ENCODE measurements at regions of chr7 and their contacts with region 1.

Region 1: DNA sequence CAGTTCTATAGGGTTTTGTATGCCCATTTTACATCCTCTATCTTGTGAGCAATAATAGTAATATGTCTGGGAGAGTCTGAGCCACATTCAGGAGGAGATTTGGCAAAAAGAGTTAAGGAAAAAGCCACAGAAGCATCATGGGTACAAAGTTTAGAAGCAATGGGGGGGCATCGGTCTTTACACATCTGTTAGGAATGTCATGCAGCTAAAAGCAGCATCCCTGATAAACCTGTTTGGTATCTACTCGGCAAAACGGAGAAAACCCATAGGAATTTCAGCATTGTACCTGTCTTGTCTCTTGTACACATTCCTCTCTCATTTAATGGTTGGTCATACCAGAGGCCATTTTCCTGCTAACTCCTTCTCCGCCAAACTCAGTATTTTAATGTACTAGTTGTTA is 12.5 kb upstream of the HERPUD2 start:
- DNase-seq: no peak
- ATAC-seq: no peak
- H3K4me3 ChIP-seq: no peak overlapping the region
- H3K4me3 Mint-ChIP-seq: no peak overlapping the region
- H3K27ac ChIP-seq: no peak overlapping the region
- H3K27ac Mint-ChIP-seq: no peak overlapping the region
- H3K4me1 ChIP-seq: peaks cover 13% of the 10 kb centered on the region
- H3K4me1 Mint-ChIP-seq: peaks cover 23% of the 10 kb centered on the region
- H3K27me3 ChIP-seq: no peaks in the 10 kb centered on the region
- H3K27me3 Mint-ChIP-seq: no peaks in the 10 kb centered on the region
- CTCF ChIP-seq: no peak

Region 2: GRCh38 chr7:35723011-35723410 is 15.6 kb after region 1 on chr7:
- CTCF ChIA-PET with region 1: interaction called, 25 read pairs
- POLR2A ChIA-PET with region 1: interaction called, 7 read pairs
- intact Hi-C with region 1: loop called (anchors 2 kb)
- DNase-seq: peak in 3 of 9 experiments; percentile 22 to 84 (median 75)
- ATAC-seq: peak; percentile 61
- H3K4me3 ChIP-seq: no peak overlapping the region
- H3K4me3 Mint-ChIP-seq: no peak overlapping the region
- H3K27ac ChIP-seq: no peak overlapping the region
- H3K27ac Mint-ChIP-seq: peak overlapping the region; percentile 7
- H3K4me1 ChIP-seq: peaks cover 42% of the 10 kb centered on the region
- H3K4me1 Mint-ChIP-seq: peaks cover 57% of the 10 kb centered on the region
- H3K27me3 ChIP-seq: no peaks in the 10 kb centered on the region
- H3K27me3 Mint-ChIP-seq: no peaks in the 10 kb centered on the region
- CTCF ChIP-seq: no peak

Region 3: GRCh38 chr7:35729061-35729783 is 21.8 kb after region 1 on chr7:
- CTCF ChIA-PET with region 1: interaction called, 25 read pairs
- POLR2A ChIA-PET with region 1: interaction called, 7 read pairs
- intact Hi-C with region 1: loop called in 1 of 2 experiments (anchors 2 kb)
- DNase-seq: peak in 7 of 9 experiments; percentile 26 to 91 (median 52)
- ATAC-seq: peak; percentile 65
- H3K4me3 ChIP-seq: peak overlapping the region in 1 of 2 experiments; percentile 18
- H3K4me3 Mint-ChIP-seq: peak overlapping the region; percentile 26
- H3K27ac ChIP-seq: peak overlapping the region; percentile 22 to 77
- H3K27ac Mint-ChIP-seq: peak overlapping the region; percentile 78
- H3K4me1 ChIP-seq: peaks cover 56% of the 10 kb centered on the region
- H3K4me1 Mint-ChIP-seq: peaks cover 61% of the 10 kb centered on the region
- H3K27me3 ChIP-seq: no peaks in the 10 kb centered on the region
- H3K27me3 Mint-ChIP-seq: no peaks in the 10 kb centered on the region
- CTCF ChIP-seq: no peak

Region 4: DNA sequence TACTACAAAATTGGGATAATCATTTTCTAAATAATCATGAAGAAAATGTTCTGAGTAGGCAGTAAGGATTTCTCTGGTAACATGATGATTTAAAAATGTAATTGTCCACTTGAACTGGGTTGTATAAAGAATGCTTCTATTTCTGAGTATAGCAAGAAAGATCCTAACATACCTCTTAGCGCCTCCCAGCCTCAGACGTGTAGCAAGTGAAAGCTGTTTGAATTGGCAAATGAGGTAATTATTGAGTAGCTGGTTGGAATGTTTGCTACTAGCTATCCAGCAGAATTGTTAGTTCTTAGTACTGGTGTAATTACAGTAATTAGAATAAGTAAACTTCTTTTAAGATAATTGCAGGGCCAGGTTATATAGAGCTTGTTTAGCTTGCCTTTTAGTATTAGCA is 141.3 kb after region 1 on chr7:
- CTCF ChIA-PET with region 1: no interaction called
- POLR2A ChIA-PET with region 1: no interaction called
- intact Hi-C with region 1: no loop called
- DNase-seq: no peak
- ATAC-seq: no peak
- H3K4me3 ChIP-seq: no peak overlapping the region
- H3K4me3 Mint-ChIP-seq: no peak overlapping the region
- H3K27ac ChIP-seq: no peak overlapping the region
- H3K27ac Mint-ChIP-seq: no peak overlapping the region
- H3K4me1 ChIP-seq: peaks cover 23% of the 10 kb centered on the region
- H3K4me1 Mint-ChIP-seq: peaks cover 73% of the 10 kb centered on the region
- H3K27me3 ChIP-seq: no peaks in the 10 kb centered on the region
- H3K27me3 Mint-ChIP-seq: no peaks in the 10 kb centered on the region
- CTCF ChIP-seq: no peak

Region 5: GRCh38 chr7:35906191-35906908 is 198.9 kb after region 1 on chr7:
- CTCF ChIA-PET with region 1: interaction called, 29 read pairs
- POLR2A ChIA-PET with region 1: interaction called, 3 read pairs
- intact Hi-C with region 1: loop called (anchors 1 kb)
- DNase-seq: peak; percentile 44 to 86 (median 69)
- ATAC-seq: peak; percentile 94
- H3K4me3 ChIP-seq: no peak overlapping the region
- H3K4me3 Mint-ChIP-seq: no peak overlapping the region
- H3K27ac ChIP-seq: no peak overlapping the region
- H3K27ac Mint-ChIP-seq: no peak overlapping the region
- H3K4me1 ChIP-seq: no peaks in the 10 kb centered on the region
- H3K4me1 Mint-ChIP-seq: peaks cover 19% of the 10 kb centered on the region
- H3K27me3 ChIP-seq: no peaks in the 10 kb centered on the region
- H3K27me3 Mint-ChIP-seq: no peaks in the 10 kb centered on the region
- CTCF ChIP-seq: peak; percentile 95

Region 6: DNA sequence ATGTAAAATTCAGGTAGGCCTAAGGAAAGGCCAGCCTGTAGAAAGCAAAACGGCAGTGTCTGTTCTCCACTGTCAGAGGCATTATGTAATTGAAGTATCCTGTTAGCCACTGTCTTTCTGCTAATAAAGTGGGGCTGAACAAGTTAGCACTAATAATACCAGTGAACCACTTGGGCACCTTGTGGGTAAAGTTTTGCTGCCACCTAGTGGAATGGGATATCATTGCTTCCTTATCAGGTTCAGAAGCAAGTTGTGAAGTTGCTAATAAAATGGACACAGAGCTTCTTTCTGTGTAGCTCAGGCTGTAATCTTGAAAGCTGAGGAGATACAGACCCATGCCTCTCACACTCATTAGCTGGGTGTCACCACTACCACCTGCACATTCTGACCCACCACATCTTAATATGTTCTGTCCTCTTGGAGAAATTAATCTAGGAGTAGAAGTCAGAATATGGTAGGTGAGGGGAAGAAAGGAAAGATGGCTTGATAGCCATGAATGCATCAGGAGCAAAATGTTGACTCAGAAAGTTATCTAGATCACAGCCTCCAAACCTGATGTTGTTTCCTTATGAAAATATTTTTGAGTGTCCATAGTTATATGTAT is 268.5 kb after region 1 on chr7:
- CTCF ChIA-PET with region 1: no interaction called
- POLR2A ChIA-PET with region 1: no interaction called
- intact Hi-C with region 1: loop called in 1 of 2 experiments (anchors 5 kb)
- DNase-seq: peak in 6 of 9 experiments; percentile 27 to 81 (median 46)
- ATAC-seq: peak; percentile 76
- H3K4me3 ChIP-seq: no peak overlapping the region
- H3K4me3 Mint-ChIP-seq: no peak overlapping the region
- H3K27ac ChIP-seq: no peak overlapping the region
- H3K27ac Mint-ChIP-seq: no peak overlapping the region
- H3K4me1 ChIP-seq: no peaks in the 10 kb centered on the region
- H3K4me1 Mint-ChIP-seq: peaks cover 4% of the 10 kb centered on the region
- H3K27me3 ChIP-seq: peaks cover 3 to 7% of the 10 kb centered on the region in 2 experiments
- H3K27me3 Mint-ChIP-seq: peaks cover 15% of the 10 kb centered on the region
- CTCF ChIP-seq: peak; percentile 80

Measured in CD8-positive, alpha-beta T cell (primary cell).